Panc1 (cell line): ENCODE measurements at regions of chr12 and their contacts with region 1.

Region 1: DNA sequence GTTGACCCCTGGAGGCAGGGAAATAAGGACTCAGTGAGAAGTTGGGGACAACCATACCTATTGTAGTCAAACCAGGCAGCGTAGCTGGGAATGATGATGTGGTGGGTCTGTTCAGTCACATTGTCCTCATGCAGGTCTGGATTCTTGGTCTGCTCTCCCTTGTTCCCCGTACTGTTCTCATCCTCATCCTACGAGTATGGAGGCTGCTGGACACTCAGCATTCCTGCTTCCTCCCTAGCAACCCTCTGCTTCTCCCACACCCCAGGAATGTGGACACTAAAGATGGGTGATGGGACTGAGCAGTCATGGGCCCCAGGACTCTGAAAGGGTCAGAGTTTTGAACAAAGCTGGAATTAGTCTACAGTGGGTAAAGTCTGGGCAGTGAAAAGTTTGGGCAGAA is 10.9 kb downstream of the SMARCC2 start:
- DNase-seq: no peak
- ATAC-seq: no peak
- H3K4me3 ChIP-seq: no peak overlapping the region
- H3K27ac ChIP-seq: no peak overlapping the region
- H3K4me1 ChIP-seq: no peaks in the 10 kb centered on the region
- H3K27me3 ChIP-seq: no peaks in the 10 kb centered on the region
- CTCF ChIP-seq: no peak

Region 2: GRCh38 chr12:56158029-56158925 is 20.1 kb before region 1 on chr12 and contains the start of gene MYL6:
- CTCF ChIA-PET with region 1: no interaction called
- POLR2A ChIA-PET with region 1: interaction called, 21 read pairs
- in situ Hi-C with region 1: no loop called
- intact Hi-C with region 1: no loop called
- DNase-seq: peak; percentile 86
- ATAC-seq: peak; percentile 89
- H3K4me3 ChIP-seq: peak within 1 kb of the TSS; percentile 74 to 78
- H3K27ac ChIP-seq: peak within 1 kb of the TSS; percentile 92
- H3K4me1 ChIP-seq: peaks cover 32% of the 10 kb centered on the region
- H3K27me3 ChIP-seq: no peaks in the 10 kb centered on the region
- CTCF ChIP-seq: no peak
- total RNA-seq, gene MYL6: 1,024 TPM

Region 3: DNA sequence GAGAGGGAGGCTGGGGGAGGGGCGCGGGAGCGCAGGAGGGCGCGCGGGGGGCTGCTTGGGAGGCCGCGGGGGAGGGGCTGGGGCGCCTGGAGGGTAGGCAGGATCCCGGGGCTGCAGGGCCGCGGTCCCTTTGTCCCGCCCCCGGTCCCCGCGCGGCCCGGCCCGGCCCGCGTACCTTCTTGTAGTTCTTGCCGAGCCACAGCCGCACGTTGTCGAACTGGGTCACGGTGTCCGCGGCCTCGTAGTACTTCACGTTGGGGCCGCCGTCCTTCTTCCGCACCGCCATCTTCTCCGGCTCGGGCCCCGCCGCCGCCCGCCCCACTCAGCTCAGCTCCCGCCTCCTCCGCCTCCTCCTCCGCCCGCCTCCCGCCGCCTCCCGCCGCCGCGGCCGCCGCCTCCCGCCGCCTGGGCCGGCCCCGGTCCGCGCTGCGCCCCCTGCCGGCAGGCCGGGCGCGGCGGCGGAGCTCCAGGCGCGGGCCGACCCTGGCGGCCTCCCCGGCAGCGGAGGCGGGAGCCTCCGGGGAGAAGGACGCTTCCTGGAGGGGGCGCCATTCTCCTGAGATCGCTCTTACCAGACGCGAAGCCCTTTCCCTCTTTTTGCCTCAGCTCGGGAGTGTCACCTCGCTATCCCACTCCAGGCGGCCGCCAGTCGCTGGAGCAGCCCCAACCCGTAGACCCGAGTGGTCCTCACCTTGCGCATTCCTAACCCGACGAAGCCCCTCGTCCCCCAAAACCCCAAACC is 11.0 kb after region 1 on chr12 and contains the start of gene SMARCC2:
- CTCF ChIA-PET with region 1: interaction called, 10 read pairs
- POLR2A ChIA-PET with region 1: no interaction called
- in situ Hi-C with region 1: no loop called
- intact Hi-C with region 1: no loop called
- DNase-seq: peak; percentile 64
- ATAC-seq: peak; percentile 91
- H3K4me3 ChIP-seq: peak within 1 kb of the TSS; percentile 77 to 98
- H3K27ac ChIP-seq: peak within 1 kb of the TSS; percentile 95
- H3K4me1 ChIP-seq: peaks cover 12% of the 10 kb centered on the region
- H3K27me3 ChIP-seq: no peaks in the 10 kb centered on the region
- CTCF ChIP-seq: peak; percentile 99
- total RNA-seq, gene SMARCC2: 129 TPM

Region 4: GRCh38 chr12:56299853-56300643 is 121.7 kb after region 1 on chr12 and contains the start of gene CS:
- CTCF ChIA-PET with region 1: no interaction called
- POLR2A ChIA-PET with region 1: no interaction called
- in situ Hi-C with region 1: no loop called
- intact Hi-C with region 1: no loop called
- DNase-seq: peak; percentile 80
- ATAC-seq: peak; percentile 99
- H3K4me3 ChIP-seq: peak within 1 kb of the TSS; percentile 64 to 92
- H3K27ac ChIP-seq: peak within 1 kb of the TSS; percentile 98
- H3K4me1 ChIP-seq: peaks cover 7% of the 10 kb centered on the region
- H3K27me3 ChIP-seq: no peaks in the 10 kb centered on the region
- CTCF ChIP-seq: no peak
- total RNA-seq, gene CS: 240 TPM

Region 5: DNA sequence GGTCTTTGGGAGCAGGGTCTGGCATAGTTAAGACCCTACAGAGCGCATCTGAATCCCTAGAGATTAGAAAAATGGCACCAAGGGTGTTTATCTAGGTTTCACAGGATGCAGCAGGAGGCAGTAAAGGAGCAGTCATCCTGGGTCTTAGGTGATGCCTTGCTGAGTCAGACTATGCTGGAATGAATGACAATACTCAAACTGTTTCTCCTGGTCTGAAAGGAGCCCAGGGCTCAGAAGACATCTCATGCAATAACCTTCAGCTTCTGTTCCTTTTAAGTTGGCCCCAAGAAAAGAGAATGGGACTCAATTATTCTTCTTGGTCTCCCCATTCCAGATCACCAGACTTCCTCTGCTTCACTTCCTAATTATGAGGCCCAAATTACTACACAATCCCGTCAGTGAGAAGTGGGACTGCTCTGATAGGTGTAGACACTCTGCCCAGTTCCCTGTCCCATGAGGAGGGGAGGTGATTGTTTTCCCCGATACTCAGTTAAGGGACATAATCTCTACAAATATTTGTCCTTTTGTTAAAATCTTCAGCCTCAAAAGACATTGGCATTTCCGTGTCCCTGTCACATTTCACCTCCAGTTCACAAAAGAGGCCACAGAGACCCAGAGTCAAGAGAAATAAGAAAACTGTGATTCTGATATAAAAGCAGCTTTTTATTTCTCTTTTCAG is 199.1 kb after region 1 on chr12:
- CTCF ChIA-PET with region 1: no interaction called
- POLR2A ChIA-PET with region 1: no interaction called
- in situ Hi-C with region 1: no loop called
- intact Hi-C with region 1: no loop called
- DNase-seq: no peak
- ATAC-seq: peak; percentile 90
- H3K4me3 ChIP-seq: no peak overlapping the region
- H3K27ac ChIP-seq: no peak overlapping the region
- H3K4me1 ChIP-seq: no peaks in the 10 kb centered on the region
- H3K27me3 ChIP-seq: no peaks in the 10 kb centered on the region
- CTCF ChIP-seq: no peak